PC-3 (cell line): ENCODE measurements at regions of chr2 and their contacts with region 1.

Region 1: DNA sequence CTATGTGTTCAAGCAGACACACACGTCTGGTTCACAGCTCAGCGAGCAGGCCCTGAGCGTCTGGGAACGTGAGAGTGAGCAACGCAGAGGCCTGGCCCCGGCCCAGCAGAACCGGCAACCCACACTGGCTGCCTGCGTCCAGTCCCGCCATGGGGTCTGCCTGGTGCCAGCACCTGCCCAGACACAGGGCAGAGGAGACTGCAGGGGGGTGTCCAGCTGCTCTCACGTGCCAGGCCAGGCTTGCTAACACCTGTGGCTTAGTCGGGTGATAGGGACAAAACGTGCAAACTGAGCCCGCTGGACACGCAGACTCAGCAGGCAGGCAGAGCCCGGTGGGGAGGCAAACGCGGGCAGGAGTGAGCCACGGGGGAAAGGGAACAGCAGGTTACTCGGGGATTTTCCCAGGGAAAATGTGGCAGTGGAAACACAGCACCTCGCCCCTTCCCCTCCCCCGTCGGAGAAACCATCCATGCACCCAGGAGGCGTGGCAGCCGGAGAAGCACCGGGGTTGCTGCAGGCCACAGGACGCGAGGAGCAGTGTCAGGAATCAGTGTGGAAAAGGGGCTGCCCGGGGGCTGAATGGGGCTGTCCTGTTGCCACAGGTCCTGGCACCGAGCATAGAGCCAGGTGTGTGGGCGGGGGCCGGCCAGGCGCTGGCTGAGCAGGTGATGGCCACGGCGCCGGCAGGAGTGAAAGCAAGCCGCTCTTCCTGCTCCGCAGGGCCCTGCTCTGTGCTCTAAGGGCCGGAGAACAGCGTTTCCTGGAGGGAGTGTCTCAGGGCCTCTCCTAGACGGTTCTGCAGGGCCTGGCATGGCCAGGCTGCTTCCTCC is 154.7 kb downstream of the HDAC4 start:
- DNase-seq: no peak
- ATAC-seq: peak; percentile 36
- H3K4me3 ChIP-seq: peak overlapping the region; percentile 38; the same call in 1 of the 2 replicates
- H3K27ac ChIP-seq: peak overlapping the region; percentile 80
- H3K4me1 ChIP-seq: peaks cover 29% of the 10 kb centered on the region
- H3K27me3 ChIP-seq: no peaks in the 10 kb centered on the region
- CTCF ChIP-seq: no peak

Region 2: GRCh38 chr2:239181074-239181906 is 64.8 kb before region 1 on chr2:
- CTCF ChIA-PET with region 1: no interaction called
- POLR2A ChIA-PET with region 1: no interaction called
- intact Hi-C with region 1: no loop called
- DNase-seq: no peak
- ATAC-seq: no peak
- H3K4me3 ChIP-seq: no peak overlapping the region
- H3K27ac ChIP-seq: no peak overlapping the region
- H3K4me1 ChIP-seq: no peaks in the 10 kb centered on the region
- H3K27me3 ChIP-seq: no peaks in the 10 kb centered on the region
- CTCF ChIP-seq: no peak

Region 3: DNA sequence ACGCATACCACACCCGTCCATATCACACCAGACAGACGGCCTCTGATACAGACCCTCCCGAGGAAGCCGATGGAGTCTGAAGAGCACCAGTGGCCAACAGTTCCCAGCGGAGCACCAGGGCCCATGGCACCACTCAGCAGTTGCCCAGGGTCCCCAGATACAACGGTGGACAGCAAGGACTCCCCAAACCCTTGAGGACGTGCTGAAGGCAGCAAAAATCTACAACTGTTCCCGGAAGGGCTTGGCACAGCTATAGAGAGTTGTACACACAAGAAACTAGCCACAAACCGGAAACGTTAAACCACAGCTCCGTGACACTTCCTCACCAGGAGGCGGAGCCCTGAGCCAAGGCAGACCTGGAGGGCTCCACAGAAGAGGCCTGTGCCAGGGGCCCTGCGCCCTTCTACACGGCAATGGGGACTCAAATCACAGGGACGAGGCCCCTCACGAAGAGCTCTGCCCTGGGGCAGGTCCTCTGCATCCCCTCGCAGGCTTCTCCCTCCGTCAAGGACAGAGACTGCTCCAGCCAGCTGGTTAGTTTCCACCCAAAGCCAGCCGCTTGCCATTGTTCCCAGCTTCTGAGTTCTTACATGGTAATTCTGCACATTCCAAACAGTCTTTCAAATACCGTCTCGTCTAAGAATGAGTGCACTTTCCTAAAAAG is 21.3 kb after region 1 on chr2:
- CTCF ChIA-PET with region 1: no interaction called
- POLR2A ChIA-PET with region 1: no interaction called
- intact Hi-C with region 1: loop called (anchors 2 kb)
- DNase-seq: peak; percentile 80
- ATAC-seq: peak; percentile 89
- H3K4me3 ChIP-seq: no peak overlapping the region
- H3K27ac ChIP-seq: peak overlapping the region; percentile 21
- H3K4me1 ChIP-seq: peaks cover 34% of the 10 kb centered on the region
- H3K27me3 ChIP-seq: no peaks in the 10 kb centered on the region
- CTCF ChIP-seq: peak; percentile 47